Heart left ventricle (tissue), 16 donors: ENCODE measurements at regions of chr18 and their contacts with region 1.

Region 1: DNA sequence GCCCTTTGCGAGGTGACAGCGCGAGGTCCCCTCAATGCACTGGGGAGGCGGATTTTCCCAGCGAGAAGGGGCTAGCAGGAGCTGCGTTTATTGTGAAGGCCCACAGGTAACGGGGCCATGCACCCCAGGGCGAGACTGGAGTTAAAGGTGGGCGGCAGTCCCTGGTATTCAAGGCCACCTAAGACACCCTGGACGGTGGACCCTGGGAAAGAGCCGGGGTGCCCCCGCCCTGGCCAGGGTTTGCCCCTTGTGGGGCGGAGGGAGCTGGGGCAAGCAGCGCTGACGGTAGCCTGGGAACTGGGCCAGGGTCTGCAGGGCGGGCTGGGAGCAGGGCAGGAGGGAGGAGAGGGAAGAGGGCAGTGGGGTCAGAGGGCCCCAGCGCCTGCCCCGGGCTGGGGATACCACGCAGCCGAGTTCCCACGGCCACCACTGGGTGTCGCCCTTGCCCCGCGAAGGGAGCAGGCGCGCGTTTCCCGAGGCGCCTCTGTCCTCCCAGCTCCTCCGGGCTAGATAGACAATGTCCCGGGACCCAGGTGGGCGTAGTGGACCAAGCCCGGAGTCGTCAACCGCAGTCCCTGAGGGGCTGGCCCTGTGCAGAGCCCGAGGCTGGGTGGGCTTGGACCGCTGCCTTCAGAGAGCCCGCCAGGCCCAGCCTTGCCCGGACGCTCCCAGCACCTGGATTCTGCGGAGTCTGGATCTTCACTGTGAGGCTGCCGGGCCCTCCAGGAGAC is 80.2 kb downstream of the SMAD4 start:
- DNase-seq: peak; percentile 52 to 85 (median 64)
- ATAC-seq: peak; percentile 82 to 96 (median 94)
- H3K4me3 ChIP-seq: peak overlapping the region in 2 of 12 donors; percentile 20 to 24
- H3K27ac ChIP-seq: no peak overlapping the region
- H3K4me1 ChIP-seq: peaks cover 0 to 6% (median 0%) of the 10 kb centered on the region in 12 donors
- H3K27me3 ChIP-seq: peaks cover 0 to 4% (median 0%) of the 10 kb centered on the region in 9 donors
- CTCF ChIP-seq: peak; percentile 85 to 99 (median 96)
- POLR2A ChIP-seq: no peak

Region 2: DNA sequence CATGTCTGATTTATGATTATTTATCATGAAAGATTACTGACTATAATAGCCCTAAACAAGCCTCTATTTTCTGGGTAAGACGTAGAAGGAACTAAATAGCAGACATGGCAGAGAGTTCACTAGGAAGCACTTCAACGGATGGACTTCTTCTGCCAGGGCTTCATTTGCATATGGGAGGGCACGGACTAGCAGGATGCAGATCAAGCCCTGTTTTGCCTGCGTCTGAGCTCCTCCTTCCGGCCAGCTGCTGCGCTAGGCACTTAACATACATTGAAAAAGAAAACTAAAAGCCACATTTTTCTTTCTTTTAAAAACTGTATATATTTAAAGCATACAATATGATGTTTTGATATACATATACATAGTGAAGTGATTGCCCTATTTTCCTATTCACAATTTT is 427.2 kb after region 1 on chr18:
- intact Hi-C with region 1: loop called in 9 of 10 experiments (anchors 2 to 10 kb)
- DNase-seq: peak in 4 of 5 donors; percentile 25 to 56 (median 38)
- ATAC-seq: peak; percentile 55 to 92 (median 88)
- H3K4me3 ChIP-seq: no peak overlapping the region
- H3K27ac ChIP-seq: no peak overlapping the region
- H3K4me1 ChIP-seq: no peaks in the 10 kb centered on the region
- H3K27me3 ChIP-seq: no peaks in the 10 kb centered on the region
- CTCF ChIP-seq: peak in 9 of 12 donors; percentile 17 to 52 (median 45)
- POLR2A ChIP-seq: no peak

Region 3: GRCh38 chr18:51543658-51544155 is 433.5 kb after region 1 on chr18:
- intact Hi-C with region 1: loop called in 8 of 10 experiments (anchors 5 to 10 kb)
- DNase-seq: no peak
- ATAC-seq: no peak
- H3K4me3 ChIP-seq: no peak overlapping the region
- H3K27ac ChIP-seq: no peak overlapping the region
- H3K4me1 ChIP-seq: no peaks in the 10 kb centered on the region
- H3K27me3 ChIP-seq: no peaks in the 10 kb centered on the region
- CTCF ChIP-seq: no peak
- POLR2A ChIP-seq: no peak